MCF 10A (cell line): ENCODE measurements at regions of chr3 and their contacts with region 1.

Region 1: GRCh38 chr3:5026331-5027218 is 47.3 kb downstream of the BHLHE40 start:
- DNase-seq: peak; percentile 96
- H3K4me3 Mint-ChIP-seq: peak overlapping the region; percentile 74
- H3K27ac Mint-ChIP-seq: peak overlapping the region; percentile 84
- H3K4me1 Mint-ChIP-seq: peaks cover 23% of the 10 kb centered on the region
- H3K27me3 Mint-ChIP-seq: no peaks in the 10 kb centered on the region
- CTCF ChIP-seq: peak; percentile 71

Region 2: DNA sequence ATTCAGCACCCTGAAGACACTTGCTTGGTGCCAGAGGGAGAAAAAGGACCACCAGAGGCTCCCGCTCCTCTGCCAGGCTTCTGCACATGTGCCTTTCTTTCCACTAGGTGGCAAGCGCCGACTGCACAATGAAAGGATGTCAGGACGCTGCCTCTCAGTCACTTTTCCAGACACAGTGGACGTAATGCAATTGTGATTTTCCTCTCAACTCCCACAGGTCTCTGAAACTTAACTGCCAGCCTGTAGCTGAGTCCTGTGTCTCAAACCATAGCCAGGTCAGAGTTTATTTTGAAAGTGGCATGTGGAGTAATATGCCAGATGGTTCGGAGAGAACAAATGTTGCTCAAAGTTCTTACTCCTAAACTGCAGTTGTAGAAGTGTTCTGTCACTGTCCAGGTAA is 370.5 kb before region 1 on chr3:
- CTCF ChIA-PET with region 1: interaction called, 6 read pairs
- POLR2A ChIA-PET with region 1: no interaction called
- intact Hi-C with region 1: loop called (anchors 2 kb)
- DNase-seq: peak; percentile 71
- H3K4me3 Mint-ChIP-seq: no peak overlapping the region
- H3K27ac Mint-ChIP-seq: no peak overlapping the region
- H3K4me1 Mint-ChIP-seq: peaks cover 11% of the 10 kb centered on the region
- H3K27me3 Mint-ChIP-seq: no peaks in the 10 kb centered on the region
- CTCF ChIP-seq: peak; percentile 82

Region 3: DNA sequence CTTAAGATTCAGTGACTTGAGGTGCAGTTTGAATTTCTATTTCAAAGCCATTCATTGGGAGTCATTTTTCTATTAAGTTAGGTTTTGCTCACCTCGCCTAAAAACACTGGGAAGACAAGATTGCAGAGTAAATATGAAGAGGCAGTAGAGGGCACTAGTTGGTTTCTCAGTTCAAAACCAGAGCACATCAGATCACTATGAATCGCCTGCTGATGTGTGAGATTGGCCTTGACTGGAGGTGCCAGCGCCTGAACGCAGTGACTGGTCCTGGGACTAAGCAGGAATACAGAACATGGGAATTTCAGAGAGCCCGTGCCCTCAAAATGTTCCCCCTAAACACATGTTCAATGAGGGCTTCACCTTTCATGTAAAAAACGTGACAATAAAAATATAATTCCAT is 304.5 kb before region 1 on chr3:
- CTCF ChIA-PET with region 1: interaction called, 60 read pairs
- POLR2A ChIA-PET with region 1: interaction called, 10 read pairs
- intact Hi-C with region 1: loop called (anchors 1 kb)
- DNase-seq: peak; percentile 87
- H3K4me3 Mint-ChIP-seq: no peak overlapping the region
- H3K27ac Mint-ChIP-seq: no peak overlapping the region
- H3K4me1 Mint-ChIP-seq: peaks cover 18% of the 10 kb centered on the region
- H3K27me3 Mint-ChIP-seq: no peaks in the 10 kb centered on the region
- CTCF ChIP-seq: peak; percentile 59

Region 4: DNA sequence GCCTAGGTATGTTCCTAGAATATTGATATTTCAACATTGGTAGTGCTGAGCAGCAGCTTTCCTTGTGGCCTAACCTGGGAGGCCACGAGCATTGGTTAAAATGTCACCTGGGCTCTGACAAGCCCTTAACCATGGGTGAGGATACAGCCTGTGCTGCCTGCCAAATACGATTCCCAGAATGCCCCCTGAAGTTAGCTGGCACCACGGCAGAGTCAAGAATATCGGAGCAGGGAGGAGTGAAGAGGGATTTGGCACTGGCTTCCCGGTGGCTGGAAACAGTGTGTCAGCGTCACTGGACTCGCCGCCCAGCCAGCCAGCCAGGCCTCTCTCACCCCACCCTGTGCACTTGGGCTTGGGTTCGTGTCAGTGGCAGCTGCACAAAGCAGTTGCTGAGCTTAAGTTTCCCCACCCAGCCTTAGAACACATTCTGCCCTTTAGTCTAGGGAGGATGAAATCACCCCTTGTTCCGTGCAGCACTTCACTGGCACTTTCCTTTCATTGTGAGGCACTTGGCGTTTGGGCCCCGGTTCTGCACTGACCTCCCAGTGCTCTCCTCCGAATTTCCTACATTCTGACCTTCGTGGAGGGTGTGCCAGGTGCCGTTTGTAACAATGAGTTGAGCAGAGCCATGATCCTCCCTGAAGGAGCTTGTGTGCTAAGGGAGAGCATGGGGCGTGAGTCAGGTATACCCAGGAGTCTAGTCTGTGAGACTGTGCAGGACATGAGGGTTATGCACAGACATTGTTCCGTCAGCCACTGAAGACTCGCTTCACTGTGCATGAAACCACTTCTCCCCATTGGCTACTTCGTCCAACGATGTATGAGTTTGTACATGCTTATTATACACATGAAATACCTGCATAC is 200.1 kb before region 1 on chr3:
- CTCF ChIA-PET with region 1: interaction called, 4 read pairs
- POLR2A ChIA-PET with region 1: interaction called, 3 read pairs
- intact Hi-C with region 1: loop called (anchors 1 kb)
- DNase-seq: peak; percentile 68
- H3K4me3 Mint-ChIP-seq: peak overlapping the region; percentile 55
- H3K27ac Mint-ChIP-seq: peak overlapping the region; percentile 92
- H3K4me1 Mint-ChIP-seq: peaks cover 61% of the 10 kb centered on the region
- H3K27me3 Mint-ChIP-seq: no peaks in the 10 kb centered on the region
- CTCF ChIP-seq: no peak

Region 5: DNA sequence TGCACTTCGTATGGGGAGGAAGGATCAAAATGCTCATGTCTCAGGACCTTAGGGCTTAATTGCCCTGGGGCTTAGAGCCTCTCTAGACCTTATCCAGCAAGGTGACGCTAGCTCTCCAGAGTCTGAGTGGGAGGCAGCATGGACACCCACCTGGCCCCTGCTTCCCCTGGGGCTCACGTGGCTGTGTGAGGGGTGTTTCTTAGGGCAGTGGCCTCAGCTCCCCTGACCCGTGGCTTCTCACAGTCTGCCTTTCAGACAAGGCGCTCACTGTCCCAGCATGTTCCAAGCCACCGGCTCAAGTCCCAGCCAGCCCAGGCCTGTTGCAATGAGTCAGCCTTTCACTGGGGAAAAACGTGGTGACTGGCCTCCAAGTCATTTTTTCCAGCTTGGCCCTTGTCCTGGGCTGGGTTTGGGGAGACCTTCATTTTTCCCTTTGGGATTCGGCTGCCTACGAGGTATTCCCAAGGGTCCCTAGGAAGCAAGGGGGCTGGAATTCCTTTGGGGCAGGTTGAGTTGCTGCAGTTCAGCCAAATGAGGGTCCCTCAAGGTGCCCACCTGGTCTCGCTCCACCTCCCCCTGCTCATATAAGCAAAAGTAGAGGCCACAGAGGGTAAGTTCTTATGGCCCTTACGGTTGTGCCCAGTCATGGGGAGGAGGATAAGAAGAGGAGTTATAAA is 31.6 kb before region 1 on chr3:
- CTCF ChIA-PET with region 1: interaction called, 8 read pairs
- POLR2A ChIA-PET with region 1: interaction called, 27 read pairs
- intact Hi-C with region 1: no loop called
- DNase-seq: peak; percentile 98
- H3K4me3 Mint-ChIP-seq: no peak overlapping the region
- H3K27ac Mint-ChIP-seq: peak overlapping the region; percentile 89
- H3K4me1 Mint-ChIP-seq: peaks cover 23% of the 10 kb centered on the region
- H3K27me3 Mint-ChIP-seq: no peaks in the 10 kb centered on the region
- CTCF ChIP-seq: no peak

Region 6: DNA sequence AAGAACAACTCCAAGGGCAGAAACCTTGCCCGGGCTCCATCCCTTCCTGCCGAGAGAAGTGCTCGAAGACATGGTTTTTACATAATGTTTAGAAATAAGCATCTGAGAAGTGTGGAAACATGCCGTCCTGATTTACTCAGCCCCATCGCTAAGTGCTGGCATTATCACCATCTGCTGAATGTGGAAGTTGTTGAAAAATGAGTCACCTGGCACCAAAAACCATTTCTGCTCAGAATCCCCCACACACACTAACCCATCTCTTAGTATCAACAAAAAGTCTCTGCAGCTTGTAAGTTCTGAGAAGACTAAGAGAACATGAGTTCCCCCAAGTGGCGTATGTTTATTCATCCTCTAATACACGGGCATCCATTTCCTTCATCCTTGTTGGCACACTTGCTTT is 44.5 kb after region 1 on chr3:
- CTCF ChIA-PET with region 1: interaction called, 3 read pairs
- POLR2A ChIA-PET with region 1: interaction called, 14 read pairs
- intact Hi-C with region 1: no loop called
- DNase-seq: peak; percentile 78
- H3K4me3 Mint-ChIP-seq: no peak overlapping the region
- H3K27ac Mint-ChIP-seq: peak overlapping the region; percentile 42
- H3K4me1 Mint-ChIP-seq: peaks cover 24% of the 10 kb centered on the region
- H3K27me3 Mint-ChIP-seq: no peaks in the 10 kb centered on the region
- CTCF ChIP-seq: no peak